ENCODE measurements at regions of chr19 and their contacts with region 1.

Region 1: DNA sequence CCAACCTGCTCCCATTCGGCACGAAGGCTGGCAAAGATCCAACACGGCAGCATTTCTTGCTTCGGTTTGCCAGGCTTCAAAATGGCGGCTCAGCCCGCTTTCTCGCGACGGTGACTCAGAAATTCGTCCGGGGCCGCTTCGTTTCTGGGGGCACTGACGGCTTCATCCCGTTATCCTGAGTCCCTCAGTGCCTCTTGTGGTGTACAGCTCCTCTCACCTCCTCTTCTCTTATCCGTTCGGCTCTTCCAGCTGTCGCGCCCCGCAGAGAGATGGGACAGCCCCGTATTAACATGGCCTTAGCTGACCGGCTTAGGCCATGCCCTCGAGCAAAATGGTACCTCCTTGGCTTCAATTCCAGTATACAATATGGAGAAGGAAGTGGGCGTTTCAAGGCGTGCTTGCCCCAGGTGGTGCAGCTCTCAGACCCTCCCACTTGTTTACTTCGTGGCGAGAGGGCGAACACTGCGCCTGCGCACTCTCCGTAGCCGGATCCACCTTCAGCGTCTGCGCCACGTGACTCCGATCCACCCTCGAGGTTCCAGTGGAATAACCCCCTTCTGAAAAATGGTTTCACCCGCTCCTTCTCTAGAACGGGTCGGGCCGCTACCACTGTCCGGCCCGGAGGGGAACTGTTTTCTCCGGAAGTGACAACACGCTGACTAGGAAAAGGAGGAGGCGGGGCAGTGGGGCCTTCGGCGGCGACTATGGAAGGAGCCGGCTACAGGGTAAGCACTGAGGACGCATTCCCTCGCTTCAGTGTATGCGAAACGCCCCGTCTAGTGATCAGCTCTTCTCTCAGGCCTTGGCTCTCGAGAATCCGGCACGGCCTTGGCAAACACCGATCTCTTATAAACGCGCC is at the starts of genes AKT1S1 and TBC1D17:
- DNase-seq: peak; percentile 99
- ATAC-seq: peak; percentile 75
- H3K4me3 Mint-ChIP-seq: no peak within 1 kb of the TSS
- H3K27ac Mint-ChIP-seq: no peak within 1 kb of the TSS
- H3K4me1 Mint-ChIP-seq: peaks cover 25% of the 10 kb centered on the region
- H3K27me3 Mint-ChIP-seq: no peaks in the 10 kb centered on the region
- total RNA-seq, gene AKT1S1: 16.1 to 20.3 TPM
- total RNA-seq, gene TBC1D17: 29.1 to 29.6 TPM

Region 2: DNA sequence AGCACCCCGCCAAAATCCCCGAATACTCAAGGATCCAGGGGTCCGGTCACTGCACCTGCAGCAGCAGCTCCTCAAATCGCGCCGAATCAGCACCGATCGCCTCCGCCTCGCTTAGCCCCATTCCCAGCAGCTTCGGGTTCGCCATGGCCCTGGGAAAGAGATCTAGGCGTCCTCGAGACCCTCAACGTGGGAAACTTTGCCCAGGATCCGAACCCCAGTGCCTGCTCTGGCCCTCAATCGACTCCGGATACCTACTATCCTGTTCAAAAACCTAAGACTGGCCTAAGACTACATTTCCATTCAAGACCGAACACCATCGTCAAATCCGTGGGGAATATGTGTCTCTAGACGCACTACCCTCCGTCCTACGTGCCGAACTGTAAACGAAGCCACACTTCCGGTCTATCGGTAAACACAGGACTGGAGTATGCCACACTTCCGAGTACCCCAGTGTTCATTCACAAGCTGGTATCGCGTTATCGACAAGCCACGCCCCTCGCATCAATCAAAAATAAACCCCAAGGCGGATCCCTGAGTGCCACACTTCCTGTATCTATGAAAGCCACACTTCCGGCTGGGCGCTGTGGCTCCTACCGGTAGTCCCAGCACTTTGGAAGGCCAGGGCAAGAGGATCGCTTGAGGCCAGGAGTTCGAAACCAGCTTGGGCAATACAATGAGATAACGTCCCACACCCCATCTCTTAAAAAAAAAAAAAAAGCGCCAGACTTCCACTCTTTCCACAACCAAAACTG is 425.6 kb before region 1 on chr19 and contains the start of gene PIH1D1:
- CTCF ChIA-PET with region 1: no interaction called
- POLR2A ChIA-PET with region 1: no interaction called
- intact Hi-C with region 1: loop called in 1 of 2 experiments (anchors 1 kb)
- DNase-seq: peak; percentile 98
- ATAC-seq: peak; percentile 71
- H3K4me3 Mint-ChIP-seq: peak within 1 kb of the TSS; percentile 100
- H3K27ac Mint-ChIP-seq: peak within 1 kb of the TSS; percentile 100
- H3K4me1 Mint-ChIP-seq: peaks cover 50% of the 10 kb centered on the region
- H3K27me3 Mint-ChIP-seq: no peaks in the 10 kb centered on the region
- total RNA-seq, gene PIH1D1: 117 to 138 TPM

Region 3: DNA sequence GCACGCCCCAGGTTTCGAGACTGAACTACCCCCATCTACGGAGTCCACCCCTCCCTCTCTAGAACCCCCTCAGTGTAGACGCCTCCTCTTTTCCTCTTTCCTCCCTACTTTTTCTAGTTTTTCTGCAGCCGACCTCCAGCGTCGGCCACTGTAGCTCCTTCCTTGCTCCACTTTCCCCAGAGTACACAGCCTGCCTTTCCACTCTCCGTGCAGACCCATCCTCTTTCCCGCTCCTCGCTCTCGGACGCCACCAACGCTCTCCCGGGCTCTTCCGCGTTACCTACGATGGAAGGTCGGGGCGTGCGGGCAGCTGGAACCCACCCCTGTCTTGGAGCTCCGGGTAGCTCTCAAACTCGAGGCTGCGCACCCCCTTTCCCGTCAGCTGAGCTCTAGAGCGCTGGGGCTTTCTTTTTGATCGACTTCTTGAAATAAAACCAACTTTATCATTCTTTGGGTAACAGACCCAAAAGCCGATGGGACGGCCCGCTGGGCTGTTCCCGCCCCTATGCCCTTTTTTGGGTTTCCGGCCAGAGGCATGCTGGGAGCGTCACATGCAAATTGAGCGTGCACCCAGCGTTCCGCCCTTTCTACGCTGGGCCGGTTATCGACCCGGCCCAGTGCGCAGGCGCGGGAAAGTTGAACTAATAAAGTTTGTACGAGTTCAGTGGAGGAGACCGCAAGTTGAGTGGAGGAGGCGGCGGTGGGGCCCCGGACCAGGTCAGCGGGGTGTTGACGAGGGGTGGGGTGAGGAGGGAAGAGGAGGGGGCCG is 211.7 kb before region 1 on chr19 and contains the starts of genes BCL2L12 and IRF3:
- CTCF ChIA-PET with region 1: no interaction called
- POLR2A ChIA-PET with region 1: no interaction called
- intact Hi-C with region 1: loop called in 1 of 2 experiments (anchors 1 kb)
- DNase-seq: peak; percentile 100
- ATAC-seq: peak; percentile 86
- H3K4me3 Mint-ChIP-seq: peak within 1 kb of the TSS; percentile 96
- H3K27ac Mint-ChIP-seq: peak within 1 kb of the TSS; percentile 92
- H3K4me1 Mint-ChIP-seq: peaks cover 29% of the 10 kb centered on the region
- H3K27me3 Mint-ChIP-seq: no peaks in the 10 kb centered on the region
- total RNA-seq, gene BCL2L12: 79.6 to 93.8 TPM
- total RNA-seq, gene IRF3: 123 to 125 TPM

Region 4: DNA sequence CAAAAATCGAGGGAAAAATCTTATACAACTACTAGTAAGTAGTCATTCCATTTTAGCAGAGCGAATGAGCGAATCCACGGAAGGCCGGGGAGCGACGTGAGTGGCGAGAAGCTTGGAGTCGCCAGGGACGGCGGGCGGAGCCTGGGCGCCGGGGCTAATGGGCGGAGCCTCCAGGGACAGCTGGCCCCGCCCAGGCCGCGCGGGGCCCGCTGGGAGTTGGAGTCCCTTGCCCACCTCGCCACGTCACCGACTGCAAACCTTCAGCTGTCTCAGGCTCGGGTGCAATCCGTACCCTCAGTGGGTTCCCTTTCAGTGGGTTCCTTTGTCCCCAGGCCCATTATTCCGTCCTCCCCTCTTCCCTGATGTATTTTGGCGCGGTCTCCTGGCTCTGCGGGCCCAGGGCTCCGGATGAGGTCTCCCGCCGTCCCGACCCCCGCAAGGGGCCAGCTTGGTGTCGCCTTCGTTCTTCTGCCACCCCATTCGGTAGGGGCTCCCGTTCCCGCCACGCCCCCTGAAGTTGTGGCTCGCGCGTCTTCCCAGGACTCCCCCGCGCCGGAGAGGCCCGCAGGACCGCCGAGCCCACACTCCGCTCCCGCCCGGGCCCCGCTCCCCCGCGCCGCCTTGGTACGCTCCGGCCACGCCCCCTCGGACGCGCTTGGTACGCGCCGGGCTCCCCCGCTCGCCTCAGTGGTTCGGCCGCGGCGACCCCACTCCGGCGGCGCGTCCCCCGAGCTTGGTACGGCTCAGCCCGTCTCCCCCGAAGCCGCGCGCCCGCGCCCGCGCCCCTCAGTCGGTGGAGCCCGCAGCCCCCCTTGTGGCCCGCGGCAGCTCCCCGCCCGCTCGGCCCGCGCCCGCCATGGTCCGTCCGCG is 26.5 kb before region 1 on chr19 and contains the start of gene PTOV1:
- CTCF ChIA-PET with region 1: no interaction called
- POLR2A ChIA-PET with region 1: no interaction called
- intact Hi-C with region 1: loop called (anchors 1 kb)
- DNase-seq: peak; percentile 95
- ATAC-seq: peak; percentile 91
- H3K4me3 Mint-ChIP-seq: peak within 1 kb of the TSS; percentile 85
- H3K27ac Mint-ChIP-seq: peak within 1 kb of the TSS; percentile 91
- H3K4me1 Mint-ChIP-seq: peaks cover 36% of the 10 kb centered on the region
- H3K27me3 Mint-ChIP-seq: no peaks in the 10 kb centered on the region
- total RNA-seq, gene PTOV1: 76.9 to 104 TPM

Region 5: GRCh38 chr19:49983645-49984229 is 106.5 kb after region 1 on chr19:
- CTCF ChIA-PET with region 1: no interaction called
- POLR2A ChIA-PET with region 1: no interaction called
- intact Hi-C with region 1: loop called in 1 of 2 experiments (anchors 5 kb)
- DNase-seq: peak; percentile 90
- ATAC-seq: peak; percentile 82
- H3K4me3 Mint-ChIP-seq: no peak overlapping the region
- H3K27ac Mint-ChIP-seq: no peak overlapping the region
- H3K4me1 Mint-ChIP-seq: peaks cover 13% of the 10 kb centered on the region
- H3K27me3 Mint-ChIP-seq: no peaks in the 10 kb centered on the region

Region 6: DNA sequence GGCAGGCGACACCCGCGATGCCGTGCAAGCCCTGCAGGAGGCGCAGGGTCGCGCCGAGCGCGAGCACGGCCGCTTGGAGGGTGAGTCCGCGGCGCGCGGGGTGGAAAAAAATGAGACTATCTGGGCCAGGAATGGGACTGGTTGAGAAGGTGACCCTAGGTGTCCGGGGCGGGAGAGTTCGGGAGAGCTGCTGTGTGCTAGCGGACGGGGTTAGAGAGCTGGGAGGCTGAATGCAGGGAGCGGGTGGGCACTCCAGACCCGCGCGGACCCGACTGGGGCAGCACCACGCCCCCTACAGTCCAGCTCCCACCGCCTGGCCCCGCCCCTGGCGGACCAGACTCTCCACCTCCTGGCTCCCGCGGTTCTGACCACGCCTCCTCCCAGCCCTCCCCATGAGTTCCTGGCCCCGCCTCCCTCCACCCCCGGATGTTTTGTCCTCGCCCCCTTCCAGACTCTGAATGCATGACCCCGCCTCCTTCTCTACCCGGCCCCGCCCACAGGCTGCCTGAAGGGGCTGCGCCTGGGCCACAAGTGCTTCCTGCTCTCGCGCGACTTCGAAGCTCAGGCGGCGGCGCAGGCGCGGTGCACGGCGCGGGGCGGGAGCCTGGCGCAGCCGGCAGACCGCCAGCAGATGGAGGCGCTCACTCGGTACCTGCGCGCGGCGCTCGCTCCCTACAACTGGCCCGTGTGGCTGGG is 847.4 kb after region 1 on chr19:
- CTCF ChIA-PET with region 1: no interaction called
- POLR2A ChIA-PET with region 1: no interaction called
- intact Hi-C with region 1: loop called in 1 of 2 experiments (anchors 2 kb)
- DNase-seq: peak; percentile 99
- ATAC-seq: peak; percentile 87
- H3K4me3 Mint-ChIP-seq: peak overlapping the region; percentile 80
- H3K27ac Mint-ChIP-seq: peak overlapping the region; percentile 63
- H3K4me1 Mint-ChIP-seq: peaks cover 26% of the 10 kb centered on the region
- H3K27me3 Mint-ChIP-seq: peaks cover 36% of the 10 kb centered on the region